ENCODE measurements at regions of chr6 and their contacts with region 1.

Region 1: GRCh38 chr6:18503593-18504231 is 116.6 kb downstream of the RNF144B start:
- DNase-seq: peak; percentile 56
- H3K4me3 Mint-ChIP-seq: no peak overlapping the region
- H3K27ac Mint-ChIP-seq: no peak overlapping the region
- H3K4me1 Mint-ChIP-seq: no peaks in the 10 kb centered on the region
- H3K27me3 Mint-ChIP-seq: no peaks in the 10 kb centered on the region

Region 2: GRCh38 chr6:17156112-17156921 is 1347.4 kb before region 1 on chr6:
- CTCF ChIA-PET with region 1: no interaction called
- intact Hi-C with region 1: loop called (anchors 5 kb)
- DNase-seq: peak; percentile 76
- H3K4me3 Mint-ChIP-seq: no peak overlapping the region
- H3K27ac Mint-ChIP-seq: no peak overlapping the region
- H3K4me1 Mint-ChIP-seq: no peaks in the 10 kb centered on the region
- H3K27me3 Mint-ChIP-seq: peaks cover 9% of the 10 kb centered on the region

Region 3: GRCh38 chr6:17820055-17820454 is 683.7 kb before region 1 on chr6:
- CTCF ChIA-PET with region 1: no interaction called
- intact Hi-C with region 1: loop called (anchors 5 kb)
- DNase-seq: no peak
- H3K4me3 Mint-ChIP-seq: no peak overlapping the region
- H3K27ac Mint-ChIP-seq: no peak overlapping the region
- H3K4me1 Mint-ChIP-seq: no peaks in the 10 kb centered on the region
- H3K27me3 Mint-ChIP-seq: peaks cover 7% of the 10 kb centered on the region

Region 4: DNA sequence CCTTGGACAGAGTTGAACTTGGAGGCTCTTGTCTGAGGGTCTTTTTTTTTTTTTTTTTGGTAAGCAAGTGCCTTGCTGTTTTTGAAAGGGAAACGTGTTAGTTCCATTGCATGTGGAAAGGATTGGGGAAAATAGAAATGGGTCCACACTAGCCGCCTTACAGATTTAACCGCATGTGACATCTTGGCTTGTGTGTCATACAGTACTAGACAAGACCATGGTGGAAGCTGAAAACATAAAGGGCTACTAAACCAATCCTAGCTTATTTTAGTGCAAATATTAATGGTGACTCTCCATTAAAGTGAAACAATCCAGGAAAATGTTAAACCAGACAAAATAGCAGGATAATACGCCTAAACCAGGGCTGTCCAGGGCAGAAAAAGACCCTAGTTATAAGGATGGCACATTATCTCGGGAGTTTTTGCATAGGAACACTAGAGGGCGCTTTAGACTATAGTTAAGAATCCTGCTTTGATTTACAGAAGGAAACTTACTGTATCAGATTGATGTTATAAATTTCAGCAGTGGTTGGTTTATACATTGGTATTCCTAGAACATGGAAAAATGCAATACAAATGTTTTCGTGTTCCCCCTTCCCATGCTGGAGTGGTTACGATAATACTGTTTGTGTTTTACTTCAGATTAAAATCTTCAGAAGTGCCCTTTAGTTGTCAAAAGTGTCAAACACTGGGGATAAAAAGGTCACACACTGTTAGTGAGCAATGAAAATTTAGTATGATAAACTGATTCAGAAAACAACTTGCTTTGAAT is 179.6 kb before region 1 on chr6:
- CTCF ChIA-PET with region 1: interaction called, 110 read pairs
- intact Hi-C with region 1: loop called (anchors 1 kb)
- DNase-seq: peak; percentile 12
- H3K4me3 Mint-ChIP-seq: no peak overlapping the region
- H3K27ac Mint-ChIP-seq: no peak overlapping the region
- H3K4me1 Mint-ChIP-seq: peaks cover 6% of the 10 kb centered on the region
- H3K27me3 Mint-ChIP-seq: no peaks in the 10 kb centered on the region

Region 5: GRCh38 chr6:18387061-18387721 is 116.5 kb before region 1 on chr6 and contains the start of gene RNF144B:
- CTCF ChIA-PET with region 1: interaction called, 9 read pairs
- intact Hi-C with region 1: loop called (anchors 5 kb)
- DNase-seq: peak; percentile 77
- H3K4me3 Mint-ChIP-seq: peak within 1 kb of the TSS; percentile 86
- H3K27ac Mint-ChIP-seq: peak within 1 kb of the TSS; percentile 32
- H3K4me1 Mint-ChIP-seq: peaks cover 25% of the 10 kb centered on the region
- H3K27me3 Mint-ChIP-seq: no peaks in the 10 kb centered on the region
- total RNA-seq, gene RNF144B: 1.5 to 3.2 TPM

Region 6: DNA sequence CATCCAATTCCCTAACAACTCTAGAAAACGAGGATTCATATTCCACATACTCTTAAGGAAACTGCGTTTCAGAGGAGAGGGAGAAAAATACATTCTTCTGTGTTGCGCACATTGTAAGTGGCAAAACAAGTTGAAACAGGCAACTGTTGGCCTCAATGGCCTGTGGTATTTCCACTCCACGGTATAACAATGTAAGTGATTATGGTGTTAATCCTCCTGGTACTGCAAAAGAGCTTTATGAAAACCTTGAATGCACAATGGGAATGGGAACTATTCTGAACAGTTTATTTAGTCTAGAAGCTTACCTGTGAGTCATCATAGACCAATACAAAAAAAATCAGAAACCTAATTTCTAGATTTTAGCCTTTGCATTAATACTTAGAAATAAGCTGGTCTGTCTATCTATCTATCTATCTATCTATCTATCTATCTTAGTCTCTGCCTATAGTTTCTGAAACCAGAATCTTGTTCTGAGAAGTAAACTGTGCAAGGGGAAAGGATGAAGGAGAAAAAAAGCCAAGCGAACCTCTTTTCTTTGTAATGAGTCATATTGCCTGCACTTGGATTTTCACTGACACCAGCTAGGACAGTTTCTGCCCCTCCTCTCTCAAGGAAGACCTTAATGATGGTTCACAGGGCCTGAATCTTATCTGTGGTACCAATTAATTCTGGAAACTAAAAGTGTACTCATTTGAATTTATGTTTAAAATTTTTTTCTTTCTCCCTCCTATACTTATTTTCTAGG is 15.0 kb before region 1 on chr6:
- CTCF ChIA-PET with region 1: interaction called, 4 read pairs
- intact Hi-C with region 1: loop called (anchors 2 kb)
- DNase-seq: no peak
- H3K4me3 Mint-ChIP-seq: no peak overlapping the region
- H3K27ac Mint-ChIP-seq: no peak overlapping the region
- H3K4me1 Mint-ChIP-seq: peaks cover 13% of the 10 kb centered on the region
- H3K27me3 Mint-ChIP-seq: peaks cover 14% of the 10 kb centered on the region